ENCODE measurements at regions of chr12 and their contacts with region 1.

Region 1: DNA sequence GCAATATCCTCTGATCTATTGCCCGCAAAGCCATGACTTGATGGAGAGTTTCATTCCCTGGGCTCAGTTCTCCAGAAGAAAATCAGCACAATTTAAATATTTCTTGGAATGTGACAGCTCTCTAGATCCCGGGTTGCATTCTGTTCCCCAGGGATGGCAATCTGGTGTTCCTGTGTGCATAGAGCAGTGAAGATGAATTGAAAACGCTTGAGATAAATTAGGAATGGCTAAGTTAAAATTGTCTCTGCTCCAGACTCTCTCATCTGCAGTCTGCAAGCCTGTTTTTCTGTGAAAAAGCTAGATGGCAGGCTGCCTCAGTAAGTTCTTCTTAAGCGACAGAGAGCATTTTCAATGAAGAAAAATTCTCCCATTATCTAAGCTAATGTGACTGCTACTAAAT is 582.5 kb upstream of the MGAT4C start:
- DNase-seq: no peak
- ATAC-seq: no peak
- H3K4me3 ChIP-seq: no peak overlapping the region
- H3K4me3 Mint-ChIP-seq: no peak overlapping the region
- H3K27ac ChIP-seq: no peak overlapping the region
- H3K27ac Mint-ChIP-seq: no peak overlapping the region
- H3K4me1 ChIP-seq: no peaks in the 10 kb centered on the region
- H3K4me1 Mint-ChIP-seq: no peaks in the 10 kb centered on the region
- H3K27me3 ChIP-seq: no peaks in the 10 kb centered on the region
- H3K27me3 Mint-ChIP-seq: no peaks in the 10 kb centered on the region

Region 2: GRCh38 chr12:86647800-86648199 is 190.9 kb before region 1 on chr12:
- CTCF ChIA-PET with region 1: no interaction called
- POLR2A ChIA-PET with region 1: no interaction called
- intact Hi-C with region 1: no loop called
- DNase-seq: no peak
- ATAC-seq: no peak
- H3K4me3 ChIP-seq: no peak overlapping the region
- H3K4me3 Mint-ChIP-seq: no peak overlapping the region
- H3K27ac ChIP-seq: no peak overlapping the region
- H3K27ac Mint-ChIP-seq: no peak overlapping the region
- H3K4me1 ChIP-seq: no peaks in the 10 kb centered on the region
- H3K4me1 Mint-ChIP-seq: no peaks in the 10 kb centered on the region
- H3K27me3 ChIP-seq: no peaks in the 10 kb centered on the region
- H3K27me3 Mint-ChIP-seq: no peaks in the 10 kb centered on the region

Region 3: DNA sequence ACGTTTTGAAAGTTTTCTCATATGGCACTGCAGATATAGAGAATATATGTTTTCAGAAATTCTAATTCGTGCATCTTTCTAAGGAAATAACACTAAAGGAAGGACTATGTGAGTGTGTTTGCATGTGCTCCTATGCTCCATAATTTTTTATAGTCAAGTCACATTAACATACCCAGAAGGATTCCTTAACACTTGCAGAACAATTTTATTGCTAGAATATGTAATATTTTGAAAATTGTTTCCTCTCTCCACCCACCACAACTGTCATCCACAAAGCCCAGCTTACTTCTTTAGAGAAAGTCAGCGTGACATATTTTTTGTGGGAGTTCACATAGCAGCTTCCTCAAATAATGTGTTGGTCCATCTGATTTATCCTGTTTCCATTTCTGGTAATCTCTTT is 22.1 kb after region 1 on chr12:
- CTCF ChIA-PET with region 1: no interaction called
- POLR2A ChIA-PET with region 1: no interaction called
- intact Hi-C with region 1: loop called in 1 of 2 experiments (anchors 1 kb)
- DNase-seq: no peak
- ATAC-seq: no peak
- H3K4me3 ChIP-seq: no peak overlapping the region
- H3K4me3 Mint-ChIP-seq: no peak overlapping the region
- H3K27ac ChIP-seq: no peak overlapping the region
- H3K27ac Mint-ChIP-seq: no peak overlapping the region
- H3K4me1 ChIP-seq: no peaks in the 10 kb centered on the region
- H3K4me1 Mint-ChIP-seq: no peaks in the 10 kb centered on the region
- H3K27me3 ChIP-seq: no peaks in the 10 kb centered on the region
- H3K27me3 Mint-ChIP-seq: no peaks in the 10 kb centered on the region

Measured in naive thymus-derived CD4-positive, alpha-beta T cell (primary cell).